Left ventricle myocardium inferior (tissue), 1 donor: ENCODE measurements at regions of chr10 and their contacts with region 1.

Region 1: GRCh38 chr10:28587970-28588290 is 55.0 kb downstream of the WAC start:
- DNase-seq: no peak
- H3K4me3 ChIP-seq: no peak overlapping the region
- H3K27ac ChIP-seq: peak overlapping the region; percentile 64
- H3K4me1 ChIP-seq: peaks cover 62% of the 10 kb centered on the region
- H3K27me3 ChIP-seq: no peaks in the 10 kb centered on the region
- CTCF ChIP-seq: peak; percentile 50

Region 2: DNA sequence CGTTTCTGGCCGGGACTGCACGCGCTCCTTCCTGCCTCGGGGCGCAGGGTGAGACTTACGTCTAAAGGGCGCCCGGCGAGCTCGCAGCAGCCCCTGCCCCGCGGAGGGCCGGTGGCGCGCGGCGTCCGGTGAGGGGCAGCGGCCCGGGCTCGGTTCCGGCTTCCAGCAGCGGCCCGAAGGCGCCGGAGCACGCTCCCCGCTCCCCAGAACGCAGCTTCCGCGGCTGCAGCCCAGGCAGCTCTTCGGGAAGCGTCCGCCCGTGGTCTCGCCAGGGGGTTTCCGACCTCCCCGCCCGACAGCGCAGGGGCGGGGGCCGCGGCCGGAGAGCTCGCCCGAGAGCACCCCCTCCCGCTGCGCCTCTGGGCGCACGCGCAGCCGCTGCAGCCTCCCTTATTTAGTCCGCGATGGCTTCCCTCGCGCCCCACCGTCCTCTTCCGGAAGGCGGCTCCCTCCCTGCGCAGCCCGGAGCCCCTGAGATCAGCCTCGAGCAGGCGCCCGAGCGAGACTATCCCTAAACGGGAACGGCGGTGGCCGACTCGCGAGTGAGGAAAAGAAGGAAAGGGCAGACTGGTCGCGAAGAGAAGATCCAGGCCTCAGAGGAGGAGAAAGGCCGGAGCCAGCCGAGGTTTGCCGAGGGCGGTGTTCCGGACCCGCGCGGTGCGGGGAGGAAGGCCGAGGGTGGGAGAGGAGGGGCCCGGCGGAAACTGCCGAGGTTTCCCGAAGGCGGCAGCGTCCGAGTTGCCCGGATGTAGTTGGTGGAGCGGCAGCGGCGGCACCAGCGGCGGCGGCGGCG is 55.4 kb before region 1 on chr10 and contains the start of gene WAC:
- intact Hi-C with region 1: loop called (anchors 10 kb)
- DNase-seq: peak; percentile 96
- H3K4me3 ChIP-seq: peak within 1 kb of the TSS; percentile 93
- H3K27ac ChIP-seq: peak within 1 kb of the TSS; percentile 100
- H3K4me1 ChIP-seq: peaks cover 60% of the 10 kb centered on the region
- H3K27me3 ChIP-seq: no peaks in the 10 kb centered on the region
- CTCF ChIP-seq: no peak
- total RNA-seq, gene WAC: 103 TPM

Region 3: DNA sequence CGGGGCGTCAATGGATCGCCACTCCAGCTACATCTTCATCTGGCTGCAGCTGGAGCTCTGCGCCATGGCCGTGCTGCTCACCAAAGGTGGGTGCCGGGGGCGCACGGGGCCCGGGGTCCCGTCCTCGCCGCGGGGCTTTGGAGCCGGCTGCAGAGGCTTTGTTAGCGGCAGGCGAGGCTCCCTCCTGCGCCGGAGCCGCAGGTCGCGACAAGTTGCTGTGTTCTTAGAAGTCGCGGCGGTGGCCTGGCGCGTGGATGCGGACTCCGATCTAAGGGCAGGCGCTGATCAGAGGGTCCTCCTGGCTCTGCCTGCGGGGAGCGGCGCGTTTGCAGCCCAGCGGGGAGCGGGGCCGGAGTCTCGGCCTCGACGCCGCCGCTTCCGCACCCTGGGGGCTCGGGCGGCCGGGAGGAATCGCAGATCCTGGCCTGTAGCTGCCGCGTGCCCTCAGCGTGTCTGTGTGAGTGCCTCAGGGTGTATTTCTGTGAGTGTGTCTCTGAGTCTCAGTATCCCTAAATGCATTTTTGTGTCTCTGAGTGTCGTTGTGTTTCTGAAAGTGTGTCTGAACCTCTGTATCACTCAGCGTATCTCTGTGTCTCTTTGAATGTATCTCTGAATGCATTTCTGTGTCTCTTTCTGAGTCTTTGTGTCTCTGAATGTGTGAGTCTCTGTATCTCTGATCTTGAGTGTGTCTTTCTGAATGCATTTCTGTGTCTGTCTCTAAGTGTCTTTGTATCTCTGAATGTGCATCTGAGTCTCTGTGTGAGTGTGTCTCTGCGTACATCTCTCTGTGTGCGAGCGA is 90.2 kb after region 1 on chr10:
- intact Hi-C with region 1: no loop called
- DNase-seq: peak; percentile 31
- H3K4me3 ChIP-seq: peak overlapping the region; percentile 85
- H3K27ac ChIP-seq: peak overlapping the region; percentile 89
- H3K4me1 ChIP-seq: peaks cover 58% of the 10 kb centered on the region
- H3K27me3 ChIP-seq: peaks cover 24% of the 10 kb centered on the region
- CTCF ChIP-seq: no peak

Region 4: GRCh38 chr10:28769091-28769604 is 181.2 kb after region 1 on chr10:
- intact Hi-C with region 1: no loop called
- DNase-seq: no peak
- H3K4me3 ChIP-seq: no peak overlapping the region
- H3K27ac ChIP-seq: no peak overlapping the region
- H3K4me1 ChIP-seq: no peaks in the 10 kb centered on the region
- H3K27me3 ChIP-seq: no peaks in the 10 kb centered on the region
- CTCF ChIP-seq: no peak